ENCODE measurements at regions of chr12 and their contacts with region 1.

Region 1: DNA sequence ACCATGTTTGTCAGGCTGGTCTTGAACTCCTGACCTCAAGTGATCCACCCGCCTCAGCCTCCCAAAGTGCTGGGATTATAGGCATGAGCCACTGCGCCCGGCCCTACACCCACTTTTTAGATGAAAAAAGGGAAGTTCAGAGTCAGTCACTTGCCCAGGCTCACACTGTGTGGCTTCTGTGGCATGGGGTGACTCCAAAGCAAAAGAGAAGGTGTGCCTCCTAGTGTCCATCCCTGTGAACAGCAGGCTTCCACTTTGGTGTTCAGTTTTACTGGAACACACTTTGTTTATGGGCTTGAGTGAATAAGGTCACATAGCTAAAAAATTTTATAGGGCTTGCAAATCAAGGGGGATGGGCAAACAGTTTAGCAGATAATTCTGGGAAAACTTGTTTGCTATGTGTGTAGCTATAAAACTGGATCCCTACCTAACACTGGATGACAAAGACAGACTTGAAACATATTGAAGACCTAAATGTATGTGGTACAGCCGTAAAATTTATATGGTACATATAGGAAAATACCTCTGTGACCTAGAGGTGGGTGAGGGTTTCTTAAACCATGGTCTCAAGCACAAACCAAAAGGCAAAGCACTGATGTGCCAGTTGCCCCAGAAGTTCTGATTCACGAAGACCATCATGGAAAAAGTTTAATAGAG is 54.9 kb downstream of the EID3 start:
- DNase-seq: peak in 1 of 2 donors; percentile 76
- H3K4me3 ChIP-seq: no peak overlapping the region
- H3K27ac ChIP-seq: no peak overlapping the region
- H3K4me1 ChIP-seq: peaks cover 0 to 19% of the 10 kb centered on the region in 2 donors
- H3K27me3 ChIP-seq: no peaks in the 10 kb centered on the region
- CTCF ChIP-seq: peak; percentile 78 to 82 (median 80)

Region 2: DNA sequence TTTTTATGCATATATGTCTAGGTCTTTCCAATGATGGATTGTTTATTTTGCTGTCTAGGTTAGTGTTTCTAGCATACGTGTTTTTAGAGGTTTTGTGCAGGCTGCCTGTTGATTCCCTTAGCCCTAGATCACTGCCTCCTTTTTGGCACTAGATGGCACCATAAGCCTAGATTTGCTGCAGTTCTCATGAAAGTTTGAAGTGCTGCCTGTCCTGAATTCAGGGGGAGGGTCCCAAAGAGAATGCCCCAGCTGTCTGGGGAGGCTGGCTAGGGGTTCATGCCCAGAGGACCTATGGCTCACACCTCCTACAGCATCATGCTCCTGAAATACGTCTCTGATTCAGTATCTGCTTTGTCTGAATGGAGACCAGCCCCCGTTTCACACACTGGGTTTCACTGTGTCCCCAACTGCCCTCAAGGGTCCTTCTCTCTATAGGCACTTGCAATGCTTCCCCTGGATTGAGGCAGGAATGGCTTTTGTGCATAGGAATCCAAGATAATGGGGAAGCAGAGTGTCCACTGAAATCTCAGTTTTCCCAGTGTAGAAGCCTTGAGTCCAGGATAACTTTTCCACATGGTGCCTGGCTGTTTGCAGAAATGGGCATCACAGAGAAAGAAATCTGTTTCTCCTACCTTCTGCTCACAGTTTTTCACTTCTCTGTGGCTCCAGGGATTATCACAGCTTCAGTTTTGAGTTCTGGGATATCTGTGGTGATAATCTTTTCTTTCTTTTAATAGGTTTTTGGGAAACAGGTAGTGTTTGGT is 157.1 kb before region 1 on chr12:
- intact Hi-C with region 1: loop called (anchors 2 kb)
- DNase-seq: peak in 1 of 2 donors; percentile 69
- H3K4me3 ChIP-seq: no peak overlapping the region
- H3K27ac ChIP-seq: no peak overlapping the region
- H3K4me1 ChIP-seq: peaks cover 0 to 14% of the 10 kb centered on the region in 2 donors
- H3K27me3 ChIP-seq: no peaks in the 10 kb centered on the region
- CTCF ChIP-seq: peak; percentile 80 to 84 (median 83)

Region 3: GRCh38 chr12:104522985-104523722 is 164.7 kb after region 1 on chr12:
- intact Hi-C with region 1: no loop called
- DNase-seq: no peak
- H3K4me3 ChIP-seq: no peak overlapping the region
- H3K27ac ChIP-seq: no peak overlapping the region
- H3K4me1 ChIP-seq: peaks cover 6 to 48% of the 10 kb centered on the region in 2 donors
- H3K27me3 ChIP-seq: no peaks in the 10 kb centered on the region
- CTCF ChIP-seq: no peak

Measured in ascending aorta (tissue), 2 donors.